HepG2 (cell line): ENCODE measurements at regions of chr5 and their contacts with region 1.

Region 1: GRCh38 chr5:5291357-5291756 is 131.1 kb upstream of the ICE1 start:
- DNase-seq: no peak
- ATAC-seq: no peak
- H3K4me3 ChIP-seq: no peak overlapping the region
- H3K27ac ChIP-seq: no peak overlapping the region
- H3K4me1 ChIP-seq: peaks cover 2% of the 10 kb centered on the region; the same call in 1 of the 2 replicates
- H3K27me3 ChIP-seq: no peaks in the 10 kb centered on the region
- CTCF ChIP-seq: no peak
- EP300 ChIP-seq: no peak
- POLR2A ChIP-seq: no peak
- RAD21 ChIP-seq: no peak

Region 2: GRCh38 chr5:5398046-5398445 is 106.7 kb after region 1 on chr5:
- CTCF ChIA-PET with region 1: no interaction called
- POLR2A ChIA-PET with region 1: no interaction called
- in situ Hi-C with region 1: no loop called
- intact Hi-C with region 1: loop called (anchors 10 kb)
- DNase-seq: no peak
- ATAC-seq: no peak
- H3K4me3 ChIP-seq: no peak overlapping the region
- H3K27ac ChIP-seq: no peak overlapping the region
- H3K4me1 ChIP-seq: no peaks in the 10 kb centered on the region
- H3K27me3 ChIP-seq: no peaks in the 10 kb centered on the region
- CTCF ChIP-seq: no peak
- EP300 ChIP-seq: no peak
- POLR2A ChIP-seq: no peak
- RAD21 ChIP-seq: no peak